H1 (cell line): ENCODE measurements at regions of chr7 and their contacts with region 1.

Region 1: GRCh38 chr7:29119538-29120199 is 26.7 kb downstream of the CPVL start:
- DNase-seq: no peak
- H3K4me3 ChIP-seq: no peak overlapping the region
- H3K27ac ChIP-seq: no peak overlapping the region
- H3K4me1 ChIP-seq: peaks cover 0 to 3% (median under 1%) of the 10 kb centered on the region in 4 experiments; a peak in 2 of 7 replicates
- H3K27me3 ChIP-seq: no peaks in the 10 kb centered on the region
- CTCF ChIP-seq: no peak
- EP300 ChIP-seq: no peak
- POLR2A ChIP-seq: no peak
- RAD21 ChIP-seq: no peak

Region 2: GRCh38 chr7:28718055-28718481 is 401.6 kb before region 1 on chr7:
- CTCF ChIA-PET with region 1: no interaction called
- POLR2A ChIA-PET with region 1: no interaction called
- DNase-seq: no peak
- H3K4me3 ChIP-seq: no peak overlapping the region
- H3K27ac ChIP-seq: no peak overlapping the region
- H3K4me1 ChIP-seq: no peaks in the 10 kb centered on the region
- H3K27me3 ChIP-seq: no peaks in the 10 kb centered on the region
- CTCF ChIP-seq: no peak
- EP300 ChIP-seq: no peak
- POLR2A ChIP-seq: no peak
- RAD21 ChIP-seq: no peak

Region 3: DNA sequence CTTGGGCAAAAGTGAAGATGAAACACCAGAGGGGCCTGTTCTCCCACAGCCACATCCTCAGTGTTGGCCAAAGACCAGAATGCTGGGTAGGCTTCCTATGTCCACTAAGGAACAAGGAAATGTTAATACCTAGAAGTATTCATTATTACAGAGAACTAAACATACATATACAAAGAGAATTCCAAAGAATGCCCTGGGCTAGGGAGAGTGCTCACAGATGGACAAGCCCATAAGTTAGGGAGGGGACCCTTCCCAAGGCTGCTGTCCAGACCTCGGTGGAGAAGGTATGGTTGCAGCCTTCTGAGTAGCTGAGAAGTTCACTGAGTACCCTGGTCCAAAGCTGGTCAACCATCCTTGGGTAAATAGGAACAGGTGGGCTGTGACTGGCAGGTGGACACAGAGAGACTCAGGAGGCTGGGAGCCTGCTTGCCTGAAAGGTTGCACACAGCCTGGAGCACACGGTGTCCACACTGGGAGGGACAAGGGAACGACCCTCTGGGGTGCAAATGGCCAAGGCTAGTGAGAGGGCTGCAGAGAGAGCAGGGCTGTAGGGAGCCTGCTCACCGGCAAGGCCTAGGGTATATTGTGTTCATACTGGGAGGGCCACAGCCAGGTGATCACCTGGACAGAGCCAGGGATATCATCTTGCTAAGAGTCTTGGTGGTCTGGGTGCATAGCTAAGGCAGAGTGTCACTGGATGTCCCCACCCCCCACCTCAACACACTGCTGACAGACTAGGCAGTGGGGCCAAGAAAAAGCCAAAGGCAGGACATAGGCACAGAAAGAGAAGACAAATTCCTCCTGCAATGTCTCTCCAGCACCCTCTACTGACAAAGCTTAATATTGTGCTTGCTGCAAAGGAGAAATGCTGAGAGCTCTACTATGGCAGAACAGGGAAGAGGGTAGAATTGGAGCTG is 13.7 kb before region 1 on chr7:
- CTCF ChIA-PET with region 1: interaction called, 35 read pairs
- POLR2A ChIA-PET with region 1: no interaction called
- DNase-seq: peak in 1 of 2 experiments; percentile 21
- H3K4me3 ChIP-seq: no peak overlapping the region
- H3K27ac ChIP-seq: no peak overlapping the region
- H3K4me1 ChIP-seq: no peaks in the 10 kb centered on the region
- H3K27me3 ChIP-seq: no peaks in the 10 kb centered on the region
- CTCF ChIP-seq: peak in 2 of 3 experiments; percentile 89 to 90; a peak in 3 of 4 replicates
- EP300 ChIP-seq: no peak
- POLR2A ChIP-seq: no peak
- RAD21 ChIP-seq: peak; percentile 94 to 95

Region 4: GRCh38 chr7:29217113-29217512 is 97.4 kb after region 1 on chr7:
- CTCF ChIA-PET with region 1: no interaction called
- POLR2A ChIA-PET with region 1: no interaction called
- DNase-seq: no peak
- H3K4me3 ChIP-seq: no peak overlapping the region
- H3K27ac ChIP-seq: no peak overlapping the region
- H3K4me1 ChIP-seq: no peaks in the 10 kb centered on the region; a peak in 2 of 7 replicates
- H3K27me3 ChIP-seq: no peaks in the 10 kb centered on the region
- CTCF ChIP-seq: no peak
- EP300 ChIP-seq: no peak
- POLR2A ChIP-seq: no peak
- RAD21 ChIP-seq: no peak